ENCODE measurements at regions of chr4 and their contacts with region 1.

Region 1: GRCh38 chr4:40056716-40057585 is at the start of gene N4BP2:
- DNase-seq: peak; percentile 87
- ATAC-seq: peak; percentile 72
- H3K4me3 ChIP-seq: peak within 1 kb of the TSS; percentile 69 to 91 (median 82)
- H3K4me3 Mint-ChIP-seq: peak within 1 kb of the TSS; percentile 95
- H3K27ac ChIP-seq: peak within 1 kb of the TSS; percentile 79 to 84
- H3K27ac Mint-ChIP-seq: peak within 1 kb of the TSS; percentile 94
- H3K4me1 ChIP-seq: peaks cover 14 to 17% of the 10 kb centered on the region in 2 donors
- H3K4me1 Mint-ChIP-seq: peaks cover 27% of the 10 kb centered on the region
- H3K27me3 ChIP-seq: no peaks in the 10 kb centered on the region
- H3K27me3 Mint-ChIP-seq: no peaks in the 10 kb centered on the region
- CTCF ChIP-seq: peak; percentile 83
- total RNA-seq, gene N4BP2: 12.8 and 16.4 TPM in 2 replicates

Region 2: DNA sequence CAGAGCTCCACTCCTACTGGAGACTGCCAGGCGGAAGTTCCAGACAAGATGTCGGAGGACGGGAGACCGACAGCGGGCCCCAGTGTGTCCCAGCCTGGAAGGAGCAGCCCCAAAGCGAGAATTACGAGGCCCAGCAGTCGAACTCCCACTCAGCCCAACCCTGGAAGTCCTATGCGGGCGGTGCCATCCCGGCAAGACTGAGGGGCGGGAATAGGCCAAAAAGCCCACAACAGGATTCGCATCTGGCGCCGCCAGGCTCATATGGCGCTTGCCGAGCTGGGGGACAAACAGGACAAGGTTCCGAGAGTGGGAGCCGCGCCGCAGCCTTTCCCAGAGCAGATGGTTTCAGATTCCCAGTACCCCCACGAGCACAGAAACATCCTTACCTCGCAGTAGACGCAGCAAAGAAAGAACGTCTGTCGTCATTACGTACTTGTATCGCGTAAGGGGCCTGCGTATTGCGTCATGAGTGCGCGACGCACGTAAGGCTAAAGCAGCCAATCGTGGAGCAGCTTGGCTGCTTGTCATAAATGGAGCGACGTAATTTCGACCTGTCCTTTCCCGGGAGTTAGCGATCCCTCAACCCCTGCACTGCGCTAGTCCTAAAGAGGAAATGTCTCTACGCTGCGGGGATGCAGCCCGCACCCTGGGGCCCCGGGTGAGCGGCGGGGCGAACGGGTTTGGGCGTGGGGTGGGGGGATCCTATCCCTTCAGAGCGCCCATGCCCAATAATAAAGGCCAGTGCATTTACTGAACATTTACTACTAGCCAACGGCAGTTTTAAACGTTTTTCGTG is 598.2 kb before region 1 on chr4 and contains the starts of genes LIAS and RPL9:
- CTCF ChIA-PET with region 1: no interaction called
- POLR2A ChIA-PET with region 1: no interaction called
- intact Hi-C with region 1: loop called (anchors 5 kb)
- DNase-seq: peak; percentile 98
- ATAC-seq: peak; percentile 86
- H3K4me3 ChIP-seq: peak within 1 kb of the TSS; percentile 77 to 100 (median 98)
- H3K4me3 Mint-ChIP-seq: peak within 1 kb of the TSS; percentile 97
- H3K27ac ChIP-seq: peak within 1 kb of the TSS; percentile 98 to 99
- H3K27ac Mint-ChIP-seq: peak within 1 kb of the TSS; percentile 99
- H3K4me1 ChIP-seq: peaks cover 19 to 27% of the 10 kb centered on the region in 2 donors
- H3K4me1 Mint-ChIP-seq: peaks cover 38% of the 10 kb centered on the region
- H3K27me3 ChIP-seq: no peaks in the 10 kb centered on the region
- H3K27me3 Mint-ChIP-seq: no peaks in the 10 kb centered on the region
- CTCF ChIP-seq: no peak
- total RNA-seq, gene LIAS: 20.9 and 24.7 TPM in 2 replicates
- total RNA-seq, gene RPL9: 2,031 and 2,048 TPM in 2 replicates

Region 3: GRCh38 chr4:39697740-39698423 is 359.1 kb before region 1 on chr4 and contains the start of gene UBE2K:
- CTCF ChIA-PET with region 1: interaction called, 3 read pairs
- POLR2A ChIA-PET with region 1: no interaction called
- intact Hi-C with region 1: loop called (anchors 5 kb)
- DNase-seq: peak; percentile 94
- ATAC-seq: peak; percentile 92
- H3K4me3 ChIP-seq: peak within 1 kb of the TSS; percentile 74 to 98 (median 96)
- H3K4me3 Mint-ChIP-seq: peak within 1 kb of the TSS; percentile 100
- H3K27ac ChIP-seq: peak within 1 kb of the TSS; percentile 87 to 90
- H3K27ac Mint-ChIP-seq: peak within 1 kb of the TSS; percentile 99
- H3K4me1 ChIP-seq: peaks cover 23 to 29% of the 10 kb centered on the region in 2 donors
- H3K4me1 Mint-ChIP-seq: peaks cover 41% of the 10 kb centered on the region
- H3K27me3 ChIP-seq: no peaks in the 10 kb centered on the region
- H3K27me3 Mint-ChIP-seq: no peaks in the 10 kb centered on the region
- CTCF ChIP-seq: no peak
- total RNA-seq, gene UBE2K: 46.3 and 51.0 TPM in 2 replicates

Region 4: GRCh38 chr4:40199999-40200874 is 143.3 kb after region 1 on chr4:
- CTCF ChIA-PET with region 1: interaction called, 3 read pairs
- POLR2A ChIA-PET with region 1: interaction called, 3 read pairs
- intact Hi-C with region 1: loop called (anchors 2 kb)
- DNase-seq: peak; percentile 63
- ATAC-seq: peak; percentile 19
- H3K4me3 ChIP-seq: peak overlapping the region; percentile 79 to 99 (median 90)
- H3K4me3 Mint-ChIP-seq: peak overlapping the region; percentile 96
- H3K27ac ChIP-seq: peak overlapping the region; percentile 93 to 99
- H3K27ac Mint-ChIP-seq: peak overlapping the region; percentile 91
- H3K4me1 ChIP-seq: peaks cover 53 to 60% of the 10 kb centered on the region in 2 donors
- H3K4me1 Mint-ChIP-seq: peaks cover 64% of the 10 kb centered on the region
- H3K27me3 ChIP-seq: no peaks in the 10 kb centered on the region
- H3K27me3 Mint-ChIP-seq: no peaks in the 10 kb centered on the region
- CTCF ChIP-seq: no peak

Region 5: DNA sequence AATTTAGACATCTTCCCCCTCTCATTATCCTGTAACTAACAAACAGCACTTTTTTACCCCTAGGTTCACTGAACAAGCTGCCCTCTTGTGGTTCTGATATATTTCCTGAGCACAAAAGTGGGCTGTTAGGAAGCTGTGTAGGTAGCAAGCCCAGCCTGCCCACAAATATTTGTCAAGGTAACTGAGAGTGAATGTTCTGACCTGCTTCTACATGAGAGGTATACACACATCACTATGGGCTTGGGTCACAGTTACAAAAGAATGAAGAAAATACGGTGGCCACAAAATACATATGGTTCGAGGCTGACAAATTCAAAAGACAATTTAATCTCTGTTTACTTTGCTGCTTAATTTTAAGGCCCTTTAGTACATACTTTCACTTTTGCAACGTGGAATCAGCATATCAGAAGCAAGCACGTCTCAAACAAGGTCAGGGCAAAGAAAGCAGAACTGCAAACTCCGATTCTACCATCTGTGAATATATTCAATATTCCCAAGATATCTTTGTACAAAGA is 494.1 kb after region 1 on chr4:
- CTCF ChIA-PET with region 1: interaction called, 3 read pairs
- POLR2A ChIA-PET with region 1: no interaction called
- intact Hi-C with region 1: loop called (anchors 2 kb)
- DNase-seq: peak; percentile 80
- ATAC-seq: peak; percentile 82
- H3K4me3 ChIP-seq: peak overlapping the region; percentile 11 to 72 (median 56)
- H3K4me3 Mint-ChIP-seq: peak overlapping the region; percentile 84
- H3K27ac ChIP-seq: peak overlapping the region; percentile 77 to 84
- H3K27ac Mint-ChIP-seq: peak overlapping the region; percentile 88
- H3K4me1 ChIP-seq: peaks cover 17 to 21% of the 10 kb centered on the region in 2 donors
- H3K4me1 Mint-ChIP-seq: peaks cover 32% of the 10 kb centered on the region
- H3K27me3 ChIP-seq: no peaks in the 10 kb centered on the region
- H3K27me3 Mint-ChIP-seq: no peaks in the 10 kb centered on the region
- CTCF ChIP-seq: peak; percentile 59

Region 6: GRCh38 chr4:40897557-40898203 is 840.7 kb after region 1 on chr4:
- CTCF ChIA-PET with region 1: interaction called, 8 read pairs
- POLR2A ChIA-PET with region 1: no interaction called
- intact Hi-C with region 1: loop called (anchors 5 kb)
- DNase-seq: peak; percentile 75
- ATAC-seq: peak; percentile 73
- H3K4me3 ChIP-seq: peak overlapping the region in 2 of 5 experiments; percentile 1 to 19
- H3K4me3 Mint-ChIP-seq: peak overlapping the region; percentile 75
- H3K27ac ChIP-seq: no peak overlapping the region
- H3K27ac Mint-ChIP-seq: peak overlapping the region; percentile 70
- H3K4me1 ChIP-seq: peaks cover 4 to 5% of the 10 kb centered on the region in 2 donors
- H3K4me1 Mint-ChIP-seq: peaks cover 7% of the 10 kb centered on the region
- H3K27me3 ChIP-seq: no peaks in the 10 kb centered on the region
- H3K27me3 Mint-ChIP-seq: no peaks in the 10 kb centered on the region
- CTCF ChIP-seq: peak; percentile 96

Measured in B cell (primary cell).